PC-9 (cell line): ENCODE measurements at regions of chr7 and their contacts with region 1.

Region 1: GRCh38 chr7:115441033-115441432 is 519.1 kb downstream of the MDFIC start:
- DNase-seq: no peak
- H3K4me3 ChIP-seq: no peak overlapping the region
- H3K27ac ChIP-seq: no peak overlapping the region
- H3K4me1 ChIP-seq: no peaks in the 10 kb centered on the region
- H3K27me3 ChIP-seq: no peaks in the 10 kb centered on the region
- CTCF ChIP-seq: no peak

Region 2: DNA sequence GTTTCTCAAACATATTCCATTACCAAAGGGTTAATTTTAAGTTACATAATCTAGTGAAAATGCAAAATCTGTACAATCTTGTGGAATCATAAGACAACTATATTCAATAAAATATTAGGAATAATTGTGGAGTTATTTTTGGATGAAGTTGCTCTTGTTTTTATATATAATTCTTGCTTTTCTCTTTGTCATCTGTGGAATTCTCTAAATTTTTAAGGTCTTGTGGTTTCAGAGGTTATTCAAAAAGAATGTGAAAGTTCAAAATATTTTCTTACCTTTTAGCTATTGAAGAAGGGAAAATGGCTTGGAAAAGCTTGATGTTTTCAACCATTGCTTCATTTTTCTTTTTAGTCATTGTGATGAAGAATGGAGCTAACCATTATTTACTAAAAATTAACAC is 37.4 kb after region 1 on chr7:
- CTCF ChIA-PET with region 1: interaction called, 3 read pairs
- POLR2A ChIA-PET with region 1: interaction called, 10 read pairs
- intact Hi-C with region 1: no loop called
- DNase-seq: no peak
- H3K4me3 ChIP-seq: no peak overlapping the region
- H3K27ac ChIP-seq: no peak overlapping the region
- H3K4me1 ChIP-seq: no peaks in the 10 kb centered on the region
- H3K27me3 ChIP-seq: no peaks in the 10 kb centered on the region
- CTCF ChIP-seq: no peak